MCF 10A (cell line): ENCODE measurements at regions of chr14 and their contacts with region 1.

Region 1: GRCh38 chr14:66868004-66868403 is 321.2 kb upstream of the GARIN2 start:
- DNase-seq: no peak
- H3K4me3 Mint-ChIP-seq: no peak overlapping the region
- H3K27ac Mint-ChIP-seq: no peak overlapping the region
- H3K4me1 Mint-ChIP-seq: no peaks in the 10 kb centered on the region
- H3K27me3 Mint-ChIP-seq: no peaks in the 10 kb centered on the region
- CTCF ChIP-seq: no peak

Region 2: GRCh38 chr14:66724991-66725390 is 143.0 kb before region 1 on chr14:
- CTCF ChIA-PET with region 1: no interaction called
- POLR2A ChIA-PET with region 1: no interaction called
- intact Hi-C with region 1: no loop called
- DNase-seq: no peak
- H3K4me3 Mint-ChIP-seq: no peak overlapping the region
- H3K27ac Mint-ChIP-seq: no peak overlapping the region
- H3K4me1 Mint-ChIP-seq: no peaks in the 10 kb centered on the region
- H3K27me3 Mint-ChIP-seq: no peaks in the 10 kb centered on the region
- CTCF ChIP-seq: no peak

Region 3: GRCh38 chr14:67111022-67111421 is 243.0 kb after region 1 on chr14:
- CTCF ChIA-PET with region 1: no interaction called
- POLR2A ChIA-PET with region 1: no interaction called
- intact Hi-C with region 1: loop called (anchors 10 kb)
- DNase-seq: no peak
- H3K4me3 Mint-ChIP-seq: no peak overlapping the region
- H3K27ac Mint-ChIP-seq: no peak overlapping the region
- H3K4me1 Mint-ChIP-seq: no peaks in the 10 kb centered on the region
- H3K27me3 Mint-ChIP-seq: no peaks in the 10 kb centered on the region
- CTCF ChIP-seq: no peak